ENCODE measurements at regions of chr4 and their contacts with region 1.

Region 1: DNA sequence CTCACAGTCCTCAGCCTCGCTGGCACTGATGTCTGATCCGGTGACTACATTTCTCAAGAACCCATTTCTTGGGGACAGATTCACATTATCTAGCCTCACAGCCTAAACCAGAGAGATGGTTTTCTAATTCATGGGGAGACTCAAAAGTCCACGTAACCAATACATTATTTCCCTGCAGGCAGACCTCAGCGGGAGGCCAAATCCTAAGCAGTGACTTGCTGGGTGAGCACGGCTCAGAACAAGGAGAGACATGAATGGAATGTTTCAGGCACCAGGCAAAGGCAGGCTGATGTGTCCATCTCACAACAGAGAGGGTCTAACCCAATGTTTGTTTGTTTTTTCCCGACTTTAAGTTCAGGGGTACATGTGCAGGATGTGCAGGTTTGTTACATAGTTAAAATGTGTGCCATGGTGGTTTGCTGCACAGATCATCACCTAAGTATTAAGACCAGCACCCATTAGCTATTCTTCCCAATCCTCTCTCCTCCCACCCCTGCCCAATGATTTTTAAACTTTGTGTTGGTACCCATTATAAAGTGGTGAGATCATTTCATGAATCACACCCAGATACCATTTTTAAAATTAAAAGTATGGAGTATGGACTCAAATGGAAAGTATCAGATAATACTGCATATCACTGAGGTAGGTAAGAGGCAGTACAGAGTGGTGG is 53.3 kb downstream of the SCD5 start:
- DNase-seq: no peak
- H3K4me3 ChIP-seq: no peak overlapping the region
- H3K27ac ChIP-seq: no peak overlapping the region
- H3K4me1 ChIP-seq: no peaks in the 10 kb centered on the region
- H3K27me3 ChIP-seq: no peaks in the 10 kb centered on the region
- CTCF ChIP-seq: no peak
- POLR2A ChIP-seq: no peak

Region 2: GRCh38 chr4:82798168-82799005 is 53.1 kb after region 1 on chr4 and contains the start of gene SCD5:
- CTCF ChIA-PET with region 1: interaction called, 106 read pairs
- POLR2A ChIA-PET with region 1: no interaction called
- dilution Hi-C with region 1: no loop called
- intact Hi-C with region 1: no loop called
- DNase-seq: peak; percentile 76
- H3K4me3 ChIP-seq: peak within 1 kb of the TSS; percentile 79 to 91 (median 82)
- H3K27ac ChIP-seq: peak within 1 kb of the TSS; percentile 8
- H3K4me1 ChIP-seq: peaks cover 18% of the 10 kb centered on the region
- H3K27me3 ChIP-seq: peaks cover 0 to 3% of the 10 kb centered on the region in 2 experiments
- CTCF ChIP-seq: no peak
- POLR2A ChIP-seq: no peak
- total RNA-seq, gene SCD5: 35.8 and 38.4 TPM in 2 replicates

Region 3: GRCh38 chr4:82861529-82861928 is 116.2 kb after region 1 on chr4:
- CTCF ChIA-PET with region 1: no interaction called
- POLR2A ChIA-PET with region 1: no interaction called
- dilution Hi-C with region 1: no loop called
- intact Hi-C with region 1: no loop called
- DNase-seq: no peak
- H3K4me3 ChIP-seq: no peak overlapping the region
- H3K27ac ChIP-seq: no peak overlapping the region
- H3K4me1 ChIP-seq: peaks cover 14% of the 10 kb centered on the region
- H3K27me3 ChIP-seq: no peaks in the 10 kb centered on the region
- CTCF ChIP-seq: no peak
- POLR2A ChIP-seq: no peak

Measured in endothelial cell of umbilical vein (primary cell).